ENCODE measurements at regions of chr15 and their contacts with region 1.

Region 1: DNA sequence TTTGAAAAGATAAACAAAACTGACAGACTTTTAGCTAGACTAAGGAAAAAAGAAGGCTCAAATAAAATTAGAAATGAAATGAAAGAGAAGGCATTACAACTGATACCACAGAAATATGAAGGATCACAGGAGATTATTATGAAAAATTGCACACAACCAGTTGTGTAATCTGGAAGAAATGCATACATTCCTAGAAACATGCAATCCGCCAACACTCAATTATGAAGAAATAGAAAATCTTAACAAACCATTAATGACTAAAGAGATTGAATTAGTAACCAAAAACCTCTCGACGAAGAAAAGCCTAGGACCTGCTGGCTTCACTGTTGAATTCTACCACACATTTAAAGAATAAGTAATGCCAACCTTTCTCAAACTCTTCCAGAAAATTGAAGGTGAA is 149.5 kb downstream of the SV2B start:
- DNase-seq: no peak
- ATAC-seq: no peak
- H3K4me3 Mint-ChIP-seq: no peak overlapping the region
- H3K27ac Mint-ChIP-seq: no peak overlapping the region
- H3K4me1 Mint-ChIP-seq: no peaks in the 10 kb centered on the region
- H3K27me3 Mint-ChIP-seq: peaks cover 13% of the 10 kb centered on the region

Region 2: GRCh38 chr15:90686435-90687218 is 563.0 kb before region 1 on chr15:
- CTCF ChIA-PET with region 1: no interaction called
- POLR2A ChIA-PET with region 1: no interaction called
- intact Hi-C with region 1: no loop called
- DNase-seq: peak; percentile 50
- ATAC-seq: peak; percentile 95
- H3K4me3 Mint-ChIP-seq: peak overlapping the region; percentile 11
- H3K27ac Mint-ChIP-seq: peak overlapping the region; percentile 90
- H3K4me1 Mint-ChIP-seq: peaks cover 31% of the 10 kb centered on the region
- H3K27me3 Mint-ChIP-seq: peaks cover 6% of the 10 kb centered on the region

Region 3: DNA sequence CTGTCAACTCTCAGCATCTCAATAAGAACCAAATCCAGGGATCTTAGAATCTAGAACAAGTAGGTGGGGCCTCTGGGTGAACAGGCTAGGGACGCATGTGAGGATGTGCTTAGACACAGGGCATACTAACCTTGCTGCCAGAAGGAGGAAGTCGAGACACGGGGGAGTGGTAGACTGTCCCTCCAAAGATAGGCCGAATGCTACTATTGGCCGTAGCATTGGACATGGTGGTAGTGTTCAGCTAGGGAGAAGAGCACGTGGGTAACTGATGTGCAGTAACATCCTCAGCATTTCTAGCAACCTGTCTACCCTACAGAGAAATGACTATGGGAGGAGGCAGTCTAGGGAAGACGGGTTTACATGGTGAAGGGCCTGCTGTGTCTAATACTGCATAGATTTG is 279.3 kb before region 1 on chr15:
- CTCF ChIA-PET with region 1: no interaction called
- POLR2A ChIA-PET with region 1: no interaction called
- intact Hi-C with region 1: no loop called
- DNase-seq: no peak
- ATAC-seq: no peak
- H3K4me3 Mint-ChIP-seq: no peak overlapping the region
- H3K27ac Mint-ChIP-seq: no peak overlapping the region
- H3K4me1 Mint-ChIP-seq: no peaks in the 10 kb centered on the region
- H3K27me3 Mint-ChIP-seq: no peaks in the 10 kb centered on the region

Region 4: DNA sequence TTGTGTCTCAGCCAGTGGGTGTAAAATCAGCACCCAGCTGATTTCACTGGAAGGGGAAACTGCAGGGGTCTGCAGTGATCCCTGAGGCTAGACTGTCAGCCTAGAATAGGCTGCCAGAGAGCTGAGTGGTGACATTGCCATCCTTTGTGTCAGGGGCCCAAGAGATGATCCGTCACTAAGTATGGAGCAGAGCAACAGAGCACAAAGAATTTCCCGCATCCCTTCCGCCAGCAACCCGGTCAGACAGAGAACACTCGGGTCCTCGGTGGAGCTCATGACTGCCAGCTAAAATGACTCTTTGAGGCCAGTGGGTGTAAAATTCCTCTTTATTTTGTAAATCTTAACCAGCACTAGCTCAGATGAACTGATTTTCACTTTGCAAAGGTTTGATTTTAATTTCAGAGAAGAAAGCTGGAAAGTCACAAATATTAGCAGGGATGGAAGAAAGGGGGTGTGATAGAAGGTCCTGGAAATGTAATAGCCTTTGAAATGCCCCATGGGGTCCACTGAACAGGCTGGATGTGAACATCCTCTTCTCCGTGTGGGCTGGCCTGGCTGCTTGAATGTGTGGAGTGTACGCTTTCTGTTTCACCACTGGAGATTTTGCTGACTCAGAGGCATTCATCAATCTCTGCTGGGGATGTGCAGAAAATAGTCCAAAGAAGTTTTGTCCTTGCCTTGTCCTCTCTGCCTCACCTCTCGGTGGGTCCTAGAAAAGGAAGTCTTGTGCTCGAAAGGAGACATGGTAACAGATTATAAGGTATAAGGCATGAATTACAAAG is 10.8 kb before region 1 on chr15:
- CTCF ChIA-PET with region 1: interaction called, 24 read pairs
- POLR2A ChIA-PET with region 1: no interaction called
- intact Hi-C with region 1: no loop called
- DNase-seq: no peak
- ATAC-seq: no peak
- H3K4me3 Mint-ChIP-seq: no peak overlapping the region
- H3K27ac Mint-ChIP-seq: no peak overlapping the region
- H3K4me1 Mint-ChIP-seq: no peaks in the 10 kb centered on the region
- H3K27me3 Mint-ChIP-seq: peaks cover 19% of the 10 kb centered on the region